ENCODE measurements at regions of chr10 and their contacts with region 1.

Region 1: DNA sequence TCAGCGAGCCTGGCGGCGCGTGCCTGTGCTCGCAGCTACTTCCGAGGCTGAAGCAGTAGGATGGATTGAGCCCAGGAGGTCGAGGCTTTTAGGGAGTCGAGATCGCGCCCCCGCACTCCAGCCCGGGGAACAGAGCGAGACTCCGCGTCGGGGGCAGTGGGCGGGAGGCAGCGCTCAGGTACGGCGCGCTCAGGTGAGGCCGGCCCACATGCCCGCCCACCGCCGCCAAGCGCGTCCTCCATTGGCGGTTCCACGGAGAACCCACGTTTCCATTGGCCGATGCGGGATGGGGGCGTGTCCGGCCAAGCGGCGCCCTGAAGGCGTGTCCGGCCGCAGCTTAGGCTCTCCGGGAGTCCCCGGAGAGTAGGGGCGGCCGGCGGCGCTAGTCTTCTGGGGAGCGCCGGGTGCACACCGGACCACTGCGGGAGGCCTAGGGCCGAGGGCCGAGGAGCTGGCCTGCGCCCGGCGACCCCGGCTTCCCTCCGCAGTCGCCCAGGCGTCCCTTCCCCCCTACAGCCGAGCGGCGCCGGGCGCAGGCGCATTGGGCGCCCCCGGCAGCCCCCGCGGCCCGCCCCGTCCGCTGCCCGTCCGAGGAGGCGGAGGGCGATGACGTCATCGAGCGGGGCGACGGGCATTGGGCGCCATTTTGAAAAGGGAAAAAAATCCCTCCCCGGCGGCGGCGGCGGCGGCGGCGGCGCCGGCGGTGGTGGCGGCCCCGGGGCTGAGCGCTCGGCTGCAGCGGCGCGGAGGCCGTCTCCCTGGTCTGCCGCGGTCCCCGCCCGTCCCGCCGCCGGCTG is at the start of gene PPP2R2D:
- DNase-seq: peak; percentile 83 to 92
- H3K4me3 ChIP-seq: peak within 1 kb of the TSS; percentile 79
- H3K27ac ChIP-seq: no peak within 1 kb of the TSS
- H3K4me1 ChIP-seq: peaks cover 29% of the 10 kb centered on the region
- H3K27me3 ChIP-seq: no peaks in the 10 kb centered on the region; the same call in 1 of the 2 replicates
- CTCF ChIP-seq: no peak
- total RNA-seq, gene PPP2R2D: 23.5 TPM in 2 replicates

Region 2: DNA sequence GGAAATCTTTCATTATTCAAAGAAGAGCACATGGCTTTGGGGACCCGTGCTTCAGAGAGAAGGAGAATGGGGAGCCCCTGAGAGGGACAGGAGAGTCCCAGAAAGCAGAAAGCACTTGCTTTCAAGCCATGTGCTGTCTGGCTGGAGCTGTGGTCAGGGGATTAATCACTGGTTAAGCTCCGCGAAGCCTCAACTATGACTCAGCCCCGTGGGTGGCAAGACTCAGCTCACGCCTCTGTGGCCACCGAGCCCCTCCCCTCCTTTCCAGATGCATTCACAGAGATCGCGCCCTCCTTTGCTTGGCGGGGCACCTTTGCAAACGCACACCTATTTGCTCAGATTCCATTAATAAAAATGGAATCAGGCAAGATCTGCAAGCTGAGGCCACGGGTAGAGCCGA is 386.1 kb before region 1 on chr10:
- CTCF ChIA-PET with region 1: no interaction called
- POLR2A ChIA-PET with region 1: no interaction called
- intact Hi-C with region 1: no loop called
- DNase-seq: no peak
- H3K4me3 ChIP-seq: no peak overlapping the region
- H3K27ac ChIP-seq: no peak overlapping the region
- H3K4me1 ChIP-seq: no peaks in the 10 kb centered on the region
- H3K27me3 ChIP-seq: peaks cover 29% of the 10 kb centered on the region
- CTCF ChIP-seq: no peak

Region 3: DNA sequence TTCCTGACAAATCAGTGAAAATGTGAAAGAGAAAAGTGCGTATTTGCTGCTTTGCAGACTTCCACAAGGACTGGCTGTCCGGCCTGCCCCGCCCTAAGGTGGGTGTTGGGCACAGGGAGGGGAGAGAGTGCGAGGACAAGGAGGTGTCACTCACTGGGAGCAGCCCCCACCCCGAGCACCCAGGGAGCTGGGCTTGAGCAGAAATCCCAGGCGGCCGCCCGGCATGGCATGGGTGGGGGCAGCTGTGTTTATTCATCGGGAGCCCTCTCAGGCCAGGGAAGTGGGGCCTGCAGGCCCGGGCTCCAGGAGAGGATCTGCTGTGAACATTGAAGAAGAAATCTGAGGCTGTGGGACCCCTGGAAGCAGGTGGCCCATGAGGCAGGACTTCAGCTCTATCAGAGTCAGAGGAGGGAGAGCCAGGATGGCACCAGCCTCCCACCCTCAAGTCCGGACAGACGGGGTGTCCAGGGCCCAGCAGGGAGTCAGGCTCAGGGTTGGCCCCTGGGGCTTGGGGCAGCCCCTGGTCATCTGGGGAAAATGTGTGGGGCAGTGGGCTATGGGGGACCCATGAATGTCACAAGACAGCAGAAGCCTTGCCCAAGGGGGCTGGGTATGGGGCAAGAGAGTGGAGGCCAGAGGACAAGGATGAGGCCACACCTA is 164.1 kb before region 1 on chr10:
- CTCF ChIA-PET with region 1: no interaction called
- POLR2A ChIA-PET with region 1: no interaction called
- intact Hi-C with region 1: no loop called
- DNase-seq: no peak
- H3K4me3 ChIP-seq: no peak overlapping the region
- H3K27ac ChIP-seq: no peak overlapping the region
- H3K4me1 ChIP-seq: no peaks in the 10 kb centered on the region
- H3K27me3 ChIP-seq: peaks cover 32% of the 10 kb centered on the region
- CTCF ChIP-seq: no peak

Region 4: DNA sequence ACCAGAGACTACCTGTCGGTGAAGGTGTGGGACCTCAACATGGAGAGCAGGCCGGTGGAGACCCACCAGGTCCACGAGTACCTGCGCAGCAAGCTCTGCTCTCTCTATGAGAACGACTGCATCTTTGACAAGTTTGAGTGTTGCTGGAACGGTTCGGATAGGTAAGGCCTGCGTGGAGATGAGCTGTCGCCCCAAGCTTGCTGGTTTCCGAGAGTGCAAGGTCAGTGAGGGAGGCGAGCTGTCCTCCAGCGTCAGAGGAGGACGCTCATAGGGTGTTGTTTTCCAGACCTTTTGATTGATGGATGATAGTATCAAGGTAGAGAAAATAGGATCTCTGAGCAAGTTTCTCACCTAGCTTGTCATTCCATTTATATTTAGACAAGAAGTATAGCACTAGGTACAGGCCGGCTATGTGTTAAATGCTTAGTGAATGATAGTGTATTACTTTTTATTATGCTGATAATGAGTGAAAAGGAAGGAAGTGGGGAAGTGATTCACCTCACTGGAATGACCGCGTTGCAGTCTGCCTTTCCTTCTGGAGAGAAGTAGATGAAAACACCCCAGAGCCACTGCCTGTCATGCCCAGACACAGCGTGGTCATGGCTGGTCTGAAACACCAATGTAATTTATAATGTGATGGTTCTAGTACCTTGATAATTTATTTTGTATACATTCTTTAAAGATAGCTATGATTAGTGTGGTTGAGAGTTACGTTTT is 47.2 kb after region 1 on chr10:
- CTCF ChIA-PET with region 1: no interaction called
- POLR2A ChIA-PET with region 1: no interaction called
- intact Hi-C with region 1: loop called (anchors 5 kb)
- DNase-seq: peak in 1 of 2 experiments; percentile 48
- H3K4me3 ChIP-seq: no peak overlapping the region
- H3K27ac ChIP-seq: no peak overlapping the region
- H3K4me1 ChIP-seq: no peaks in the 10 kb centered on the region
- H3K27me3 ChIP-seq: no peaks in the 10 kb centered on the region
- CTCF ChIP-seq: no peak

Measured in PC-9 (cell line).